A549 (cell line): ENCODE measurements at regions of chr9 and their contacts with region 1.

Region 1: DNA sequence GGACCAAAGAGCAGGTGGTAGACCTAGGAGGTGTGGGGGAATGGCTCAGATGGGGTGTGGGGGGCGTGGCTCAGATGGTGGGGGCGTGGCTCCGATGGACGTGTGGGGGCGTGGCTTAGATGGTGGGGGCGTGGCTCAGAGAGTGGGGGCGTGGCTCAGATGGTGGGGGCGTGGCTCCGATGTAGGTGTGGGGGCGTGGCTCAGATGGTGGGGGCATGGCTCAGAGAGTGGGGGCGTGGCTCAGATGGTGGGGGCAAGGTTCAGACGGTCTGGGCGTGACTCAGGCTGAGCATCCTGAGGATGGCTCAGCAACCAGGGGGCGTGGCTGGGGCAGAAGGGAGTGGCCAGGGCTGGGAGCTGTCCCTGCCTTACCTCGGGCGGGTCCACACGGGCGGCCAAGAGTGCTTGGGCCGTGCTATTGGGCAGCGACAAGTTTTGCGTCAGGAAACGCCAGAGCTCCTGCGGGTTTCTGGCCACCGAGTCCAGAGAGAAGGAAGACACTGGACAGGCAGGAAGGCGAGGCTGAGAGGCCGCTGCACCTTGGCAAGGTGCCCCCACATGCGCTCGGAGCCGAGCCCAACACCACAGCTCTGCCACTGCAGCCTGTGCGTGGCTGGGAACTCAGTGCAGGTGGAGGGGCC is 5.9 kb downstream of the ABCA2 start:
- DNase-seq: peak; percentile 54 to 94
- ATAC-seq: peak; percentile 53 to 89
- H3K4me3 ChIP-seq: no peak overlapping the region
- H3K27ac ChIP-seq: peak overlapping the region in 1 of 2 experiments; percentile 34; a peak in 2 of 6 replicates
- H3K4me1 ChIP-seq: peaks cover 15% of the 10 kb centered on the region
- CTCF ChIP-seq: no peak
- EP300 ChIP-seq: no peak
- POLR2A ChIP-seq: no peak; the same call in 1 of the 2 replicates
- RAD21 ChIP-seq: no peak

Region 2: GRCh38 chr9:137000177-137000883 is 21.8 kb before region 1 on chr9:
- CTCF ChIA-PET with region 1: interaction called, 11 read pairs
- POLR2A ChIA-PET with region 1: no interaction called
- DNase-seq: no peak
- ATAC-seq: no peak
- H3K4me3 ChIP-seq: no peak overlapping the region
- H3K27ac ChIP-seq: 0 out of 6 replicates have a peak overlapping the region, but pooled peaks of 1 of the 2 experiments have one; percentile 15
- H3K4me1 ChIP-seq: peaks cover 41% of the 10 kb centered on the region
- CTCF ChIP-seq: no peak
- EP300 ChIP-seq: no peak
- POLR2A ChIP-seq: no peak
- RAD21 ChIP-seq: no peak

Region 3: DNA sequence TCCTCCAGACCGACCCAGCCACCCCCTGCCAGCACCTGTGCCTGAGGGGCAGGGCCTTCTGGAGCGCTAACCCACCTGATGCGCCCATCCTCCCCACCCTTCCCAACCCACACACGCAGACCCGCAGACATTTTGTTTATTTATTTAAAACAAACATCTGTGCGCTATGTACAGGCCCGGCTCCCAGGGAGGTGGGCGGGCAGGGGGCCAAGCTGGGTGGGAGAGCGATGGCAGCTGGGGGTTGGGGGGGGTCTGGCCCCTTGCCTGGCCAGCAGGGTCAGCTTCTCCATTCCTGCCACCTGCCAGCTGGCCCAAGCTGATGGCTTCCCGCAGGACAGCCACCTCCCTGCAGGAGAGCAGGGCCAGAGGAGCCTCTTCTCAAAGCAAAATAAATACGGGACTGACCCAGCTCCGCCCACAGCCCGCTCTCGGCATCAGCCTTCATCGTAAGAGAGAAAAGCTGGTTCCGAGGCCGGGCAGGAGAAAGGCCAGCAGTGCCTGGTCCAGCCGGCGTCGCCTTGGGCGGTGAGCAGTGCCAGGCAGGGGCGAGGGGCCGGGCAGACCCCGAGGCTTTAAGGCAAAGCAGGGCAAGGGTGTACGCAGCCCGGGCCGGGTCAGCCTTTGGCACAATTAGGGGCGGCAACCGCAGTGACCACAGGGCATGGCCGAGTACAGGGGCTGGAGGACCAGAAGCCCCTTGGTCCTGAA is 14.8 kb before region 1 on chr9:
- CTCF ChIA-PET with region 1: interaction called, 11 read pairs
- POLR2A ChIA-PET with region 1: no interaction called
- DNase-seq: no peak
- ATAC-seq: peak in 1 of 2 experiments; percentile 47; a peak in 3 of 6 replicates
- H3K4me3 ChIP-seq: no peak overlapping the region
- H3K27ac ChIP-seq: no peak overlapping the region
- H3K4me1 ChIP-seq: peaks cover 5% of the 10 kb centered on the region; the same call in 2 of the 3 replicates
- CTCF ChIP-seq: no peak
- EP300 ChIP-seq: no peak
- POLR2A ChIP-seq: no peak
- RAD21 ChIP-seq: no peak